Lower leg skin (tissue), 4 donors: ENCODE measurements at regions of chr2 and their contacts with region 1.

Region 1: GRCh38 chr2:6654279-6654678 is 211.4 kb downstream of the CMPK2 start:
- DNase-seq: no peak
- H3K4me3 ChIP-seq: no peak overlapping the region
- CTCF ChIP-seq: no peak
- POLR2A ChIP-seq: no peak

Region 2: GRCh38 chr2:6113791-6114190 is 540.5 kb before region 1 on chr2:
- intact Hi-C with region 1: no loop called
- DNase-seq: no peak
- H3K4me3 ChIP-seq: no peak overlapping the region
- CTCF ChIP-seq: no peak
- POLR2A ChIP-seq: no peak

Region 3: DNA sequence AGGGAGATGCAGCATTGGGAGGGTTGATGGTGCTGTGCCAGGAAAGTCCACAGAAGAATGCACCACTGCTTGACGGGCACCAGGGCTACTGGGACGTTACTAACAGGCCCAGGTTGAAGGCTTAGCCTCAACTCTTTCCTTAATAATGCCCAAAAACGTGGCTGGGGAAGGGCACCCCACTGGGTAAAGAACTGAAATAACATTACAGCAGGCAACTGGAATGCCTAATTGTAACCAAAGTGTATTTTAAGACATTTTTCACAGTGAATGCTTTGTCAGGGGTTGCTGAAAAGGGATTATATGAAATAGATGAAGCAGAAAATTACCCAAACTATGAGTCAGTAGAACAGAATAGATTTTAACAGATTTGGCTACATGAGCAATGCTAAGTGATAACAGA is 20.1 kb after region 1 on chr2:
- intact Hi-C with region 1: loop called (anchors 1 kb)
- DNase-seq: no peak
- H3K4me3 ChIP-seq: no peak overlapping the region
- CTCF ChIP-seq: no peak
- POLR2A ChIP-seq: no peak